PC-3 (cell line): ENCODE measurements at regions of chr6 and their contacts with region 1.

Region 1: DNA sequence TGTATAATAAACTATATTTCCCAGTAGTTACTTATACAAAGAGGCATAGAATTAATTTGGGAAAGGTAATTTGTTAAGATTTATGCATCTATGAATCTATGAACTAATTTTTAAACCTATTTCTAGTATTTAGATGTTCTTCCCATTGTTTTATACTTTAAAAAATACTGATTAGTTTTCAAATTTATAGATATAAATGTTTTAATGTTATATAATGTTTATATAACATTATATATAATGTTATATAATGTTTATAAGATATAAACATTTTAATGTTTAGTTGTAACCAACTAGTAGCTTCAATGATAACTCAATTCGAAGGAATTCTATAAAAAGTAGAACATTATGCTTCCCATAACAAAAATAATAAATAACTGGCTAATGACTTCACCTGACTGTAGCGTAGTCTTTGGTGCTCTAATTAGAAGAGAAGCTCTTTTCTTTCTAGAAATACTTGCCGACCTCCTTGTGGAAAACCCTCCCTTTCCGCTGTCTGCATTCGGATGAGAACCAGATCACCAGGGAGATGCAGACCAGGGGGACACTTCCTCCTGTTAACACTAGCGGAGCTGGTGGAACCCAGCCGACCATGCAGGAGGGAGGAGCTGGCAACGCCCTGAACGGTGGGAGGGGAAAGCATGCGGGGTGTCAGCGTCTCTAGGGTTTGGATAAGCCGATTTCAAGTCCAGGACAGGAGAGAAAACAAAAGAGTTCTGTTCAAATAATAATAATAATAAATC is 158.4 kb downstream of the OR2B2 start:
- DNase-seq: peak; percentile 92
- ATAC-seq: peak; percentile 70
- H3K4me3 ChIP-seq: peak overlapping the region; percentile 82
- H3K27ac ChIP-seq: no peak overlapping the region
- H3K4me1 ChIP-seq: peaks cover 15% of the 10 kb centered on the region
- H3K27me3 ChIP-seq: no peaks in the 10 kb centered on the region
- CTCF ChIP-seq: 0 out of 2 replicates have a peak, but pooled peaks have one; percentile 11

Region 2: DNA sequence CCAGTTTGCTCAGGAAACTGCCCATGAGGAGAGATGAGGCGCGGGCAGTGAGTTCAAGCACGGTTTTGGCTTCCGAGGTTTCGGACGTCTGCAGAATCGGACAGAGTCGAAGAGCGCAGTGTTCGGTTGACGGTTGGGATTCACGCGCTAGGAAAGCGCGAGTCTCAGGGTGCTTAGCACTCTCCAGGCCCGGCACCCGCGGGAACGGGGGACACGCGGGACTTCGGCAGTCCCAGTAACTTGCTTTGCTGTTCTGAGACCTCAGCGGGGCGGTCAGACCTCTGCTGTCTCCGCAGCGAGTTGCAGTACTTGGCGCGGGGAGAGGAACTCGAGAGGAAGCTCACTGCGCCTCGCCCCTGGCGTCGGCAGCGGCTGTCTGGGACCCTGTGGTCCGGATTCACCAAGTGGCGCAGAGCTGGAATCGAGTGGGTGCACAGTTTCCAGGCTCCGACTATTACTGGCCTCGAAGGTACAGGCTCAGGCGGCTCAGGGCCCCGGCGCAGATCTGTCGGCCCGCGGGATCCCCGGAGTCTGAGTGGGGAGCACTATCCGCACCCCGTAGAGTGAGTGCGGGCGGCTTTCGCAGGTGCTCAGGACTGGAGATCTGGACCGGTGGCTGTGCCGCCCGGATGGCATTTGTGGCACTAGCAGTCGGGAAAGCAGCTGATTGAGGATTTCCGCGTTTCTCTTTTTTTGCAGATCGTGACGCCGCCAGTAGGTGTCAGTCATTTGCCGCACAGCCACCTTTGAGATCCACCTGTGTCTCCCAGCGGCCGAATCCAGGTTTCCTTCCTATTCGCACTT is 441.5 kb before region 1 on chr6 and contains the start of gene POM121L2:
- CTCF ChIA-PET with region 1: no interaction called
- POLR2A ChIA-PET with region 1: no interaction called
- intact Hi-C with region 1: loop called (anchors 1 kb)
- DNase-seq: peak; percentile 92
- ATAC-seq: peak; percentile 82
- H3K4me3 ChIP-seq: peak within 1 kb of the TSS; percentile 89
- H3K27ac ChIP-seq: no peak within 1 kb of the TSS
- H3K4me1 ChIP-seq: no peaks in the 10 kb centered on the region
- H3K27me3 ChIP-seq: no peaks in the 10 kb centered on the region
- CTCF ChIP-seq: peak; percentile 81
- total RNA-seq, gene POM121L2: not detected in 2 replicates

Region 3: GRCh38 chr6:27503436-27504030 is 250.3 kb before region 1 on chr6:
- CTCF ChIA-PET with region 1: interaction called, 4 read pairs
- POLR2A ChIA-PET with region 1: no interaction called
- intact Hi-C with region 1: loop called (anchors 5 kb)
- DNase-seq: peak; percentile 91
- ATAC-seq: peak; percentile 25
- H3K4me3 ChIP-seq: peak overlapping the region; percentile 86
- H3K27ac ChIP-seq: peak overlapping the region; percentile 11; the same call in 1 of the 2 replicates
- H3K4me1 ChIP-seq: peaks cover 8% of the 10 kb centered on the region; the same call in 1 of the 2 replicates
- H3K27me3 ChIP-seq: no peaks in the 10 kb centered on the region
- CTCF ChIP-seq: no peak

Region 4: DNA sequence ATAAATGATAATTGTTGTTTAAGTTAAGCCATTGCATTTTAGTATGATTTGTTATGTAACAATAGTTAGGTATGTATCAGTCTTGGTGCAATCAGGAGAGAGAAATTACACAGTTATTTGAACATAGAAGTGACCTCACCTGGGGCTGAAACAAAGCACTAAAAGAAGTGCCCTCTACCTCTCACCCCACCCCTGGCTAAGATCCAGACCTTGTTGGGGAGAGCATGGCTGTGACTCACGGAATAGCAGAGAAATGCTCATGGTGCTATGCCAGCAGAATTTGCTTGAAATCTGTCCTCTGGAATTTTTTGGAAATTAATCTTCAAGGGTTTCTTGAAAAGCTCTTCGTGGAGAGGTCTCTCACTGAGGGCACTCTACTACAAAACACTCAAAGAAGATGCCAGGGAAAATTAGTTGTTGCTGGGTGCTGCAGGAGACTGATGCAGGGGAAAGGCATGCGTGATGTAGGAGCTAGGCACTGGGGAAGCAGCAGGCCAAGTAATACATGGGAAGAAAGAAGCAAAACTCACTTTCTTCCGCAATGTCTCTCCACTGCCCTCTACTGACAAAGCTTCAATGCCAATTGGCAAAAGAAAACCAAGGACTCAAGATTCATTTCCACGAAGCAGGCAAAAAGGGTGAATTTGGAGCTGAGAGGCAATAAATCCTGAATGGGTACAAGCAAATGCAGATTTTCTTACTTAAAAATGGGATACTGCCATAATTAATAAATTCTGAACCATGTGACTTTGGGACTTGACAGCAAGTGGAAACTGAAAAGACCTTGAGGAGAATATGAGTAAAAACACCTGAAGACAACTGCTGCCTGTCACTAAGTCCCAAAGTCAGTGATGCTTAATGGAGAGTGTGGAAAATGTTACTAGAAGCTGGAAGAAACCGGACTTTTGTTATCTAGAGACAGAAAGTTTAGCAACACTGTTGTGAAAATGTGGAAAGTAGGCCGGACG is 144.6 kb before region 1 on chr6:
- CTCF ChIA-PET with region 1: interaction called, 11 read pairs
- POLR2A ChIA-PET with region 1: no interaction called
- intact Hi-C with region 1: no loop called
- DNase-seq: peak; percentile 86
- ATAC-seq: peak; percentile 89
- H3K4me3 ChIP-seq: peak overlapping the region; percentile 39; the same call in 1 of the 2 replicates
- H3K27ac ChIP-seq: peak overlapping the region; percentile 49
- H3K4me1 ChIP-seq: peaks cover 7% of the 10 kb centered on the region
- H3K27me3 ChIP-seq: no peaks in the 10 kb centered on the region
- CTCF ChIP-seq: peak; percentile 90

Region 5: DNA sequence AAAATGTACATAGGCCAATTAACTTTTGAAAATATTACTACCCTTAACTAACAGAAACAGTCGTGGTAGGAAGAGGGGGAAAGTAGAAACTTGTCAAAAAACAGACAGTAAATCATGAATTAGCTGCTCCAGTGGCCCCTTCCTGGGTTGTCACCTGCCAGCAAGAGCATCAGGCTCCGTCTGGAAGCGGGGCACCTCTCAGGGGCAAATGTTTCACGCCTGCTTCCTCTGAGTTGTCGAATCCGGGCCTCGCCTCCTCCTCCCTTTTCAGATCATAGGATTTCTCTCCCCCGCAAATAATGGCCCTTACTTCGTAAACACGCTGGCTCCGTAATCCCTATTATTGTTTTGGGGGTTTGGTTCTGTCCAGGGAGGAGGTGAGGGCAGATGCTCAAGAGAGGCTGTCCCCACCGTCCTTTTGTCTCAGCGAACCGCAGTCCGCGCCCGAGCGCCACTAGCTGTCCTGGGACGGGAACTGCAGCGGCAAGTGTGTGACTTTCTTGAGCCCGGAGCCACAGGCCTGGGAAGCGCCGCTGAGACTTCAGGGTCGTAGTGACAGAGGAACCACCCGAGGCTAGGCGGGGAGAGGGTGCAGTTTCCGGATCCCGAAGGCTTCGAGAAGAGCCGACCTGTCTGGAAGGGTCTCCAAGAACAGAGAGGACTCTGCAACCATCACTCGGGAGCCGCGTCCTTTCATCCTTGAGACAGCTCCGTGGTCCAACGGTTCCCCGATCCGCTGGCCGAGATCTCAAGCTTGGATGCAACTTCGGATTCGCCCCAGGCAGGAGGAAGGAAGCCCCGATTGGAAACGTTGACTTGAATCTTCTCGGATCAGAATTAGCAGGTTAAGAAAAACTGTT is 66.5 kb before region 1 on chr6:
- CTCF ChIA-PET with region 1: interaction called, 5 read pairs
- POLR2A ChIA-PET with region 1: interaction called, 4 read pairs
- intact Hi-C with region 1: loop called (anchors 1 kb)
- DNase-seq: peak; percentile 86
- ATAC-seq: peak; percentile 78
- H3K4me3 ChIP-seq: peak overlapping the region; percentile 83
- H3K27ac ChIP-seq: 0 out of 2 replicates have a peak overlapping the region, but pooled peaks have one; percentile 7
- H3K4me1 ChIP-seq: no peaks in the 10 kb centered on the region
- H3K27me3 ChIP-seq: no peaks in the 10 kb centered on the region
- CTCF ChIP-seq: peak; percentile 90